Naive thymus-derived CD4-positive, alpha-beta T cell (primary cell): ENCODE measurements at regions of chr20 and their contacts with region 1.

Region 1: GRCh38 chr20:35146920-35147574 is at the start of gene EDEM2:
- DNase-seq: peak; percentile 87 to 94 (median 93)
- ATAC-seq: peak; percentile 88
- H3K4me3 ChIP-seq: peak within 1 kb of the TSS; percentile 88
- H3K4me3 Mint-ChIP-seq: peak within 1 kb of the TSS; percentile 90 to 99 (median 96)
- H3K27ac ChIP-seq: peak within 1 kb of the TSS; percentile 75
- H3K27ac Mint-ChIP-seq: peak within 1 kb of the TSS; percentile 82 to 96 (median 93)
- H3K4me1 ChIP-seq: peaks cover 12 to 14% of the 10 kb centered on the region in 2 donors
- H3K4me1 Mint-ChIP-seq: peaks cover 19 to 50% (median 35%) of the 10 kb centered on the region in 7 donors
- H3K27me3 ChIP-seq: no peaks in the 10 kb centered on the region
- H3K27me3 Mint-ChIP-seq: peaks cover 0 to 6% (median 0%) of the 10 kb centered on the region in 5 donors
- total RNA-seq, gene EDEM2: 15.4 to 30.9 (median 20.0) TPM

Region 2: DNA sequence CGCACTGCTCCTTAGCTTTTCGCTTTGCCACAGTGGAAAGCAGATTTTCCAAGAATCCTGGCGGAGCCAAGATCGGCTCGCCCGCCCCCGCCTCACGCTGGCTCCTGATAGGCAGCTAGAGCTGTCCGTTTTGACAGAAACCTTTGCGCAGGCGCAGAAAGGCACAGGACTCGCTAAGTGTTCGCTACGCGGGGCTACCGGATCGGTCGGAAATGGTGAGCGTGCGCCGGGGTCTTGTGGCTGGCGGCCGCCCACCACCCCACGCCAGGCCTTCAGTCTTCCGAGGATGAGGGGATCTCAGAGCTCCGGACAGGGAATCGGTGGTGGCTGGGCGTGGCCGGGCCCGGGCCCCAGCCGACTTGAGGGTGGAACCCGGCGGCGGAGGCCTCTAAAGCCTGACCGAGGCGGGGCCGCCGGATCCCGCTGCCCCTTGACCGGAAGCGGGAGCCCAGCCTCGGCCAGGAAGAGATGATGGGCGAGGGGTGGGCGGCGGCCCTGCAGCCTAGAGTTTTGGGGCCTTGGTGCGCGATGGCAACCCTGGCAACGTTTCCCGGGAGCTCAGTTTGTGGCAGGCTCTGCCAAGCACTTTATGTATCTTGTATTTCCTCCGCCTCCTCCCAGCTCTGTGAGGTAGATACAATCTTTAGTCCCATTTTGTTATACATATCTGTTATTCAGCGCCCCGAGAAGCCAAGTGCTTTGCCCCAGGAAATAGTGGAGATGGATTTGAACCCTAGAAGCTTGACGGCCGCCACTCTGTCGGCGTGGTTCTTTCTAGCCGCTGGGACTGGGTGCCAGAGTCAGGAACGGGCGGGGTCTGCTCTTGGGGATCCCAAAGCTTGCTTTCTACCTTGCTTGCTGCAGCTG is 630.6 kb before region 1 on chr20 and contains the start of gene DYNLRB1:
- CTCF ChIA-PET with region 1: no interaction called
- POLR2A ChIA-PET with region 1: no interaction called
- intact Hi-C with region 1: loop called in 1 of 2 experiments (anchors 2 kb)
- DNase-seq: peak; percentile 87 to 94 (median 92)
- ATAC-seq: peak; percentile 88
- H3K4me3 ChIP-seq: peak within 1 kb of the TSS; percentile 96
- H3K4me3 Mint-ChIP-seq: peak within 1 kb of the TSS; percentile 97 to 100 (median 99)
- H3K27ac ChIP-seq: peak within 1 kb of the TSS; percentile 86
- H3K27ac Mint-ChIP-seq: peak within 1 kb of the TSS; percentile 94 to 99 (median 97)
- H3K4me1 ChIP-seq: peaks cover 8 to 11% of the 10 kb centered on the region in 2 donors
- H3K4me1 Mint-ChIP-seq: peaks cover 12 to 59% (median 51%) of the 10 kb centered on the region in 7 donors
- H3K27me3 ChIP-seq: no peaks in the 10 kb centered on the region
- H3K27me3 Mint-ChIP-seq: no peaks in the 10 kb centered on the region
- total RNA-seq, gene DYNLRB1: 45.9 to 91.9 (median 60.7) TPM

Region 3: DNA sequence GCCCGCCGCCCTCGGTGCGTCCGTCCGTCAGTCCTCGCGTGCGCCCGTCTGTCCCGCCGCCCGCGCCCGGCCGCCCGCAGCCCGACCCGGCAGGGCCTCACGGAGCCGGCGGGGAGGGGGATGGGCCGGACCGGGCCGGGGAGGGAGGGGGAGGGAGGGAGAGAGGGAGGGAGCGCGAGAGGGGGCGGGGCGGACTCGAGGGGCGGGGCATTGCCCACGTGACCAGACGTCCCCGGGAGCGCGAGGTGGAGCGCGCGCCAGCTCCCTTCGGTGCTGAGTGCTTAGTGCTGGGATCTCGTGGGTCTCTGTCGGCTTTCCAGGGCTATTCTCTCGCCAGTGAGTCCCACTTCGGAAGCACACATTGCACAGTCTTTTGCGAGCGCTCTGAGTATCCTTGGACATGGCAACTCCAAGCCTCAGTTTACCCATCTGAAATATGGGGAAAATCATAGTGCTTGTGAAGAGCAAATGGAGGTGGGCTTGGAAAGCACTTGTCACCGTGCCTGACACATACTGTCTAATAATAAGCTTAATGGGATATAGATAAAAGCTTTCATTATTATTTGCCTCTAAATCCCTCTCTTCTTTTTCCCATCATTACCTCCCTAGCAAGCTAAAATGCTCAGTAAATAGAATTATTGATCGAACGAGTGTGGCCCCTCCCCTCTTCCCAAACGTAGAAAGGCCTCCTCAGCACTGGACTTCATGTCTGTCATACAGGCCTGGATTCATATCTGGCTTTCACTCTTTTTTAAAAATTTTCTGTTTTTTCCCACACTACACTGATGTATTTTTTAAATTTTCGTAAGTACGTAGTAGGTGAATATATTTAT is 321.3 kb before region 1 on chr20 and contains the start of gene NCOA6:
- CTCF ChIA-PET with region 1: no interaction called
- POLR2A ChIA-PET with region 1: interaction called, 3 read pairs
- intact Hi-C with region 1: loop called (anchors 1 kb)
- DNase-seq: peak; percentile 56 to 86 (median 74)
- ATAC-seq: peak; percentile 90
- H3K4me3 ChIP-seq: peak within 1 kb of the TSS; percentile 78
- H3K4me3 Mint-ChIP-seq: peak within 1 kb of the TSS; percentile 83 to 100 (median 98)
- H3K27ac ChIP-seq: peak within 1 kb of the TSS; percentile 76
- H3K27ac Mint-ChIP-seq: peak within 1 kb of the TSS; percentile 85 to 95 (median 91)
- H3K4me1 ChIP-seq: peaks cover 16 to 17% of the 10 kb centered on the region in 2 donors
- H3K4me1 Mint-ChIP-seq: peaks cover 30 to 50% (median 43%) of the 10 kb centered on the region in 7 donors
- H3K27me3 ChIP-seq: no peaks in the 10 kb centered on the region
- H3K27me3 Mint-ChIP-seq: peaks cover 0 to 17% (median 0%) of the 10 kb centered on the region in 5 donors
- total RNA-seq, gene NCOA6: 23.6 to 31.9 (median 29.3) TPM

Region 4: GRCh38 chr20:35252037-35252461 is 105.0 kb after region 1 on chr20:
- CTCF ChIA-PET with region 1: no interaction called
- POLR2A ChIA-PET with region 1: no interaction called
- intact Hi-C with region 1: loop called in 1 of 2 experiments (anchors 2 kb)
- DNase-seq: peak in 5 of 9 donors; percentile 6 to 46 (median 31)
- ATAC-seq: peak; percentile 89
- H3K4me3 ChIP-seq: no peak overlapping the region
- H3K4me3 Mint-ChIP-seq: peak overlapping the region in 6 of 10 donors; percentile 13 to 79 (median 38)
- H3K27ac ChIP-seq: peak overlapping the region; percentile 6
- H3K27ac Mint-ChIP-seq: peak overlapping the region; percentile 41 to 96 (median 83)
- H3K4me1 ChIP-seq: peaks cover 12 to 30% of the 10 kb centered on the region in 2 donors
- H3K4me1 Mint-ChIP-seq: peaks cover 13 to 33% (median 22%) of the 10 kb centered on the region in 7 donors
- H3K27me3 ChIP-seq: no peaks in the 10 kb centered on the region
- H3K27me3 Mint-ChIP-seq: no peaks in the 10 kb centered on the region

Region 5: GRCh38 chr20:35277531-35278395 is 130.7 kb after region 1 on chr20 and contains the start of gene MMP24OS:
- CTCF ChIA-PET with region 1: no interaction called
- POLR2A ChIA-PET with region 1: interaction called, 10 read pairs
- intact Hi-C with region 1: loop called in 1 of 2 experiments (anchors 1 kb)
- DNase-seq: peak; percentile 77 to 90 (median 87)
- ATAC-seq: peak; percentile 95
- H3K4me3 ChIP-seq: peak within 1 kb of the TSS; percentile 99
- H3K4me3 Mint-ChIP-seq: peak within 1 kb of the TSS; percentile 84 to 97 (median 96)
- H3K27ac ChIP-seq: peak within 1 kb of the TSS; percentile 96
- H3K27ac Mint-ChIP-seq: peak within 1 kb of the TSS; percentile 95 to 99 (median 98)
- H3K4me1 ChIP-seq: peaks cover 11 to 18% of the 10 kb centered on the region in 2 donors
- H3K4me1 Mint-ChIP-seq: peaks cover 9 to 46% (median 28%) of the 10 kb centered on the region in 7 donors
- H3K27me3 ChIP-seq: no peaks in the 10 kb centered on the region
- H3K27me3 Mint-ChIP-seq: no peaks in the 10 kb centered on the region
- total RNA-seq, gene MMP24OS: 43.8 to 88.6 (median 69.4) TPM

Region 6: GRCh38 chr20:35410613-35411012 is 263.6 kb after region 1 on chr20:
- CTCF ChIA-PET with region 1: no interaction called
- POLR2A ChIA-PET with region 1: no interaction called
- intact Hi-C with region 1: loop called in 1 of 2 experiments (anchors 1 kb)
- DNase-seq: no peak
- ATAC-seq: no peak
- H3K4me3 ChIP-seq: peak overlapping the region; percentile 79
- H3K4me3 Mint-ChIP-seq: peak overlapping the region; percentile 92 to 100 (median 98)
- H3K27ac ChIP-seq: no peak overlapping the region
- H3K27ac Mint-ChIP-seq: peak overlapping the region in 8 of 9 donors; percentile 48 to 100 (median 97)
- H3K4me1 ChIP-seq: peaks cover 8 to 9% of the 10 kb centered on the region in 2 donors
- H3K4me1 Mint-ChIP-seq: peaks cover 17 to 24% (median 22%) of the 10 kb centered on the region in 7 donors
- H3K27me3 ChIP-seq: no peaks in the 10 kb centered on the region
- H3K27me3 Mint-ChIP-seq: peaks cover 0 to 2% (median 0%) of the 10 kb centered on the region in 5 donors